Calu3 (cell line): ENCODE measurements at regions of chr18 and their contacts with region 1.

Region 1: DNA sequence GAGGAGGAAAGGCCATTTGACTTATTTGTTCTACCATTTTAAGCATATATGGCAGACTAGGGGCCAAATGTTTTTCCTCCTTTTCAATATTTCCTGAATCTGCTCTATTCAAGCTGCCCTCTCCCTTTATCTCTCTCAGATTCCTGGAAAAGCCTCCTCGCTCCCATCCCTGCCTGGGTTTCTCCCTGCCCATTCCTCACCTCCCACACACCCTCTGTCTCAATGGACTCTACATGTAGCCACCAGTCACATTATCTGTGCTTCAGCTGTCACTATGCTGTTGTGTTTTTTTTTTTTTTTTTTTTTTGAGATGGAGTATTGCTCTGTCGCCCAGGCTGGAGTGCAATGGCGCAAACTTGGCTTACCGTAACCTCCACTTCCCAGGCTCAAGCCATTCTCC is 22.9 kb downstream of the TYMS start:
- DNase-seq: no peak
- H3K4me3 Mint-ChIP-seq: no peak overlapping the region
- H3K27ac Mint-ChIP-seq: no peak overlapping the region
- H3K4me1 Mint-ChIP-seq: no peaks in the 10 kb centered on the region
- H3K27me3 Mint-ChIP-seq: no peaks in the 10 kb centered on the region
- CTCF ChIP-seq: no peak

Region 2: DNA sequence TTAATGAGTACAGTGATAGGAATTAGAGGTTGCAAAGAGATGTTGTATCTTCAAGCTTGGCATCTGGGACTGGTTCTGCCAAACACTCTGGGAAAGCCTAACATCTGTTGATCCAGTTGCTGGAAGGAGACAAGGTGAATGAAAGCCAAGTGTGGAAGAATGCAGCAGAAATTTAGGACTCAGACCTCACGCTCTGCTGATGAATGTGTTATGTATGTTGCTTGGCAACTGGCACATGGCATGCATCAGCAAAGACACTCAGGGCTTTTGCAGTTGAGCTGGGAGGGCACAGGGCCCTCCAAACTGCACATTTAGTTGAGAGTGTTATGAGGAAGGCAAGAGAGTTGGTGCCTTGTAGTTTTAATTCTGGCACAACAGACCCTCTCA is 285.4 kb before region 1 on chr18:
- CTCF ChIA-PET with region 1: no interaction called
- intact Hi-C with region 1: no loop called
- DNase-seq: no peak
- H3K4me3 Mint-ChIP-seq: no peak overlapping the region
- H3K27ac Mint-ChIP-seq: no peak overlapping the region
- H3K4me1 Mint-ChIP-seq: no peaks in the 10 kb centered on the region
- H3K27me3 Mint-ChIP-seq: peaks cover 93% of the 10 kb centered on the region
- CTCF ChIP-seq: no peak

Region 3: DNA sequence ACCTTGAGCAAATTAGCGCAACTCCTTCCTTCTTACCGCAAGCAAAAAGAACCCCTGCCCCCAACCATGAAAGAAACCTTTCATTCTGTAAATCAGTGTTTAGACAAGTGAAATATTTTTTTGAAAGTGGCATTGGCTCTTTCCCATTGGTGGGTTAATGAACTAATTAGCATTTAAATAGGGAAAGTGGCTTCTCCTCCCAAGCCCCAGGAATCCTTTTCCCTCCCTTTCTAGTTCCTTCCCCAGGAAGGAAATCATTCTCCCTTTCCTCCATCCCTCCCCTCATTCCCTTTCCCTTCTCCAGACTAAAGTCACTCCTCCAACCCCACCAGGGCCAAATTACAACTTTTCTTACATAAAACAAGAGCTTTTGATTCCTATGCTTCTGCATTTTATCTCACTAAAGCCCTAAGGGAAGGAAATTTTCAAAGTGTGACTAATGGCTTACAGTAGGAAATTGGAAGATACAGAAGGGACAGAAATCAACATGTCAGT is 45.8 kb before region 1 on chr18:
- CTCF ChIA-PET with region 1: interaction called, 12 read pairs
- intact Hi-C with region 1: no loop called
- DNase-seq: no peak
- H3K4me3 Mint-ChIP-seq: no peak overlapping the region
- H3K27ac Mint-ChIP-seq: no peak overlapping the region
- H3K4me1 Mint-ChIP-seq: peaks cover 8% of the 10 kb centered on the region
- H3K27me3 Mint-ChIP-seq: no peaks in the 10 kb centered on the region
- CTCF ChIP-seq: no peak

Region 4: GRCh38 chr18:754666-755065 is 74.3 kb after region 1 on chr18:
- CTCF ChIA-PET with region 1: no interaction called
- intact Hi-C with region 1: no loop called
- DNase-seq: no peak
- H3K4me3 Mint-ChIP-seq: no peak overlapping the region
- H3K27ac Mint-ChIP-seq: no peak overlapping the region
- H3K4me1 Mint-ChIP-seq: peaks cover 6% of the 10 kb centered on the region
- H3K27me3 Mint-ChIP-seq: no peaks in the 10 kb centered on the region
- CTCF ChIP-seq: no peak